Natural killer cell (primary cell): ENCODE measurements at regions of chr16 and their contacts with region 1.

Region 1: DNA sequence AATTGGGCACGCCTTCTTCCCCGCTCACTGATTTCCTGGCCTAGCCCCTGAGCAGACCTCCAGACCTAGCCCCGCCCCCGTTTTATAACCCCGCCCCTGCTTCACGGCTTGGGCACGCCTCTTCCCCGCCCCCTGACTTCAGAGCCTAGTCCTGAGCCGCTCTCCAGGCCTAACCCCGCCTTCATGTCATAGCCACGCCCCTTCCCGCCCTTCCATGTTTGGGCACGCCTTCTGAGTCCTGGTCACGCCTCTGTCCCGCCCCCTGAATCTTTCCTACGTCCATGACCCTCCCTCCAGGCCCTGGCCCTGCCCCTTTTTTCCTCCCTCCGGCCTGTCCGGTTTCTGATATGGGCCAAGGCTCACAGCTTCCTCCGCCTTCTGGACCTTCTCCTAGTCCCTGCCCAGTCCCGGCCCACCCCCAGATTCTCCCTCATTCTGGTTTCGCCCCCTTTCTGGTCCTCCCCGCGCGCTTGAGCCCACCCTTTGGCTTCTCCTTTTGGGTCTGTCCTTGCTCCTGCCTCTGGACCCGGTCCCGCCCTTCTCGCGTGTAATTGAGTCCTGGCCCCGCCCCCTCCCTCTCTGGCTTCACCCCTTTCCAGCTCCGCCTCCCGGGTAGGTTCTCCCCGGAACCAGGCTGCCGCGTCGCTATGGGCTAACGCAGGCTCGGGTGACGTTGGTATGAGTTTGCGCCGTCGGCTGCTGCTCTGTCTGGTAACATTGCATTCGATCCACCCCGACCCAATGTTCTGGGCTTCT is 15.1 kb upstream of the EEF2K start:
- DNase-seq: peak; percentile 99 to 100
- ATAC-seq: peak; percentile 65 to 88 (median 69)
- H3K4me3 ChIP-seq: peak overlapping the region; percentile 43
- H3K4me3 Mint-ChIP-seq: peak overlapping the region; percentile 94
- H3K27ac ChIP-seq: peak overlapping the region; percentile 99
- H3K27ac Mint-ChIP-seq: peak overlapping the region; percentile 91 to 98
- H3K4me1 ChIP-seq: peaks cover 63% of the 10 kb centered on the region
- H3K4me1 Mint-ChIP-seq: peaks cover 64 to 75% of the 10 kb centered on the region in 2 donors
- H3K27me3 ChIP-seq: no peaks in the 10 kb centered on the region
- H3K27me3 Mint-ChIP-seq: no peaks in the 10 kb centered on the region
- CTCF ChIP-seq: no peak

Region 2: DNA sequence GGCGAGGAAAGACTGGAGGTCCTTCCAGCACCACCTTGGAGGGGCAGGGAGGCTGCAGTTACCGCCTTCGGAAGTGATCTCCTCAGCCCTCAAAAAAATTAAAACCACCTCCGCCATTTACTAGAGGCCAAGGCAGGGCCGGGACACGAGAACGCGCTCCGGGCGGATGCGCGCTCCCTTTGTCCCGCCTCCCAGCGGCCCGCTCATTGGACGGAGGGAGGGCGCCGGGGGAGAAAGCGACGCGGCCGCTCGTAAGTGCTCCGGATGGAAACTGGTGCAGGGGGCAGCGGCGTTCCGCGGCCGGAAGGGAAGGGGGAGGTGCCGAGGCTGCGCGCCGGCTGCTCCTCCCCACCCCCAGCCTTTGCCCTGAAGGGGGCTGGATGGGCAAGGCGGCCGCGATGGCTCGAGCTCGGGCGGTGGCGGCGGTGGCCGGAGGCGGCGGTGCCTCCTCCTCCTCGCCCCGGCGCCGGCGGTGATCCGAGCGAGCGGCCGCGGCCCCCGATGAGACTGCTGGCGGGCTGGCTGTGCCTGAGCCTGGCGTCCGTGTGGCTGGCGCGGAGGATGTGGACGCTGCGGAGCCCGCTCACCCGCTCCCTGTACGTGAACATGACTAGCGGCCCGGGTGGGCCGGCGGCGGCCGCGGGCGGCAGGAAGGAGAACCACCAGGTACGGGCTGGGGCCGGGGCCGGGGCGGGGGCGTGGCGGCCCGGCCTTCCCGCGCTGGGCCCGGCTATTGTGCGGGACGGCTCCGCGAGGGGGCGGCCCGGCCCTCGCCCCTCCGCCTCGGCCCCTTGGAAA is 591.5 kb before region 1 on chr16 and contains the start of gene METTL9:
- intact Hi-C with region 1: loop called (anchors 5 kb)
- DNase-seq: peak; percentile 93 to 97
- ATAC-seq: peak; percentile 93 to 99 (median 95)
- H3K4me3 ChIP-seq: peak within 1 kb of the TSS; percentile 71
- H3K4me3 Mint-ChIP-seq: peak within 1 kb of the TSS; percentile 95
- H3K27ac ChIP-seq: peak within 1 kb of the TSS; percentile 93
- H3K27ac Mint-ChIP-seq: peak within 1 kb of the TSS; percentile 90 to 92
- H3K4me1 ChIP-seq: peaks cover 5% of the 10 kb centered on the region
- H3K4me1 Mint-ChIP-seq: peaks cover 35 to 49% of the 10 kb centered on the region in 2 donors
- H3K27me3 ChIP-seq: no peaks in the 10 kb centered on the region
- H3K27me3 Mint-ChIP-seq: no peaks in the 10 kb centered on the region
- CTCF ChIP-seq: no peak
- total RNA-seq, gene METTL9: 73.1 to 110 (median 85.1) TPM

Region 3: DNA sequence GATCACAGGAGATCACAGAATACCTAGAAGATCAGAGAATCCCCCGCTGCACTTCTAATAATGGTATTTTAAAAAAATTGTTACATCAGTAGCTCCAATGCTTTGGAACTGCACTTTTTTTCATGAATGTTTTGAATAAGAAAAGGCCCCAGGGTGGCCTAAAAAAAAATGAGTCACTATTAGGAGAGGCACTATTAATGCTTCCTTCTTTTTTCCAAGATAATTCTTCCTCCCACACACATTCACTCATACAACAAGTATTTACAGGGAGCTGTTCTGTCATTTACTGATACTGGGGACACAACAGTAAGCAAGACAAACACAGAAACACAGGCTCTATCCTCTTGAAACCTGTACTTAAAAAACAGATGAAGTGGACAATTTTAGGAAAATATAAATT is 189.4 kb before region 1 on chr16:
- intact Hi-C with region 1: loop called (anchors 1 kb)
- DNase-seq: peak in 1 of 2 donors; percentile 14
- ATAC-seq: no peak
- H3K4me3 ChIP-seq: no peak overlapping the region
- H3K4me3 Mint-ChIP-seq: no peak overlapping the region
- H3K27ac ChIP-seq: no peak overlapping the region
- H3K27ac Mint-ChIP-seq: no peak overlapping the region
- H3K4me1 ChIP-seq: peaks cover 7% of the 10 kb centered on the region
- H3K4me1 Mint-ChIP-seq: peaks cover 10% of the 10 kb centered on the region in 2 donors
- H3K27me3 ChIP-seq: no peaks in the 10 kb centered on the region
- H3K27me3 Mint-ChIP-seq: peaks cover 0 to 9% of the 10 kb centered on the region in 2 donors
- CTCF ChIP-seq: no peak

Region 4: GRCh38 chr16:22206013-22206841 is 15.3 kb after region 1 on chr16 and contains the start of gene EEF2K:
- intact Hi-C with region 1: loop called (anchors 1 kb)
- DNase-seq: peak; percentile 63 to 91
- ATAC-seq: peak; percentile 90 to 94 (median 93)
- H3K4me3 ChIP-seq: peak within 1 kb of the TSS; percentile 67
- H3K4me3 Mint-ChIP-seq: peak within 1 kb of the TSS; percentile 95
- H3K27ac ChIP-seq: peak within 1 kb of the TSS; percentile 62
- H3K27ac Mint-ChIP-seq: peak within 1 kb of the TSS; percentile 72 to 81
- H3K4me1 ChIP-seq: peaks cover 16% of the 10 kb centered on the region
- H3K4me1 Mint-ChIP-seq: peaks cover 20% of the 10 kb centered on the region in 2 donors
- H3K27me3 ChIP-seq: no peaks in the 10 kb centered on the region
- H3K27me3 Mint-ChIP-seq: no peaks in the 10 kb centered on the region
- CTCF ChIP-seq: peak; percentile 74
- total RNA-seq, gene EEF2K: 12.6 to 33.5 (median 22.9) TPM

Region 5: DNA sequence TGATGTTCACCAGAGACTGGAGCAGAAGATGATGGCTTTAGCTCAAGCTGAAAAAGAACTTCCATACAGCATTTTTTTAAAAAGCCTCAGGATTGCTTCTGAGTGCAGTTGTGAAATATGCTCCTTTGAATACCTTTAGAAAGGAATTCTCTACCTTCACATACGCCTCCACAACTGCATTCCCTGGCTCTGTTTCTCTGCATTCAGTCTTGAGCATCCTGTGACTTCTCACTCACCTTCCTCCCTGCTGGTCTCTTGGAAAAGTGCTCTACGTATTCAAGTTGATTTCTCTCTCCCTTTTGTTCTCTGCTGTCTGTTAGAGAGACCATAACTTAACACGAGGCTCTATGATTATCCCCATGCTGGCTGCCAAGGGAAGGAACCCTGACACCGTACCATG is 657.5 kb after region 1 on chr16:
- intact Hi-C with region 1: no loop called
- DNase-seq: no peak
- ATAC-seq: no peak
- H3K4me3 ChIP-seq: no peak overlapping the region
- H3K4me3 Mint-ChIP-seq: no peak overlapping the region
- H3K27ac ChIP-seq: no peak overlapping the region
- H3K27ac Mint-ChIP-seq: no peak overlapping the region
- H3K4me1 ChIP-seq: no peaks in the 10 kb centered on the region
- H3K4me1 Mint-ChIP-seq: no peaks in the 10 kb centered on the region
- H3K27me3 ChIP-seq: no peaks in the 10 kb centered on the region
- H3K27me3 Mint-ChIP-seq: peaks cover 9 to 32% of the 10 kb centered on the region in 2 donors
- CTCF ChIP-seq: no peak